Mammary epithelial cell (primary cell): ENCODE measurements at regions of chr16 and their contacts with region 1.

Region 1: DNA sequence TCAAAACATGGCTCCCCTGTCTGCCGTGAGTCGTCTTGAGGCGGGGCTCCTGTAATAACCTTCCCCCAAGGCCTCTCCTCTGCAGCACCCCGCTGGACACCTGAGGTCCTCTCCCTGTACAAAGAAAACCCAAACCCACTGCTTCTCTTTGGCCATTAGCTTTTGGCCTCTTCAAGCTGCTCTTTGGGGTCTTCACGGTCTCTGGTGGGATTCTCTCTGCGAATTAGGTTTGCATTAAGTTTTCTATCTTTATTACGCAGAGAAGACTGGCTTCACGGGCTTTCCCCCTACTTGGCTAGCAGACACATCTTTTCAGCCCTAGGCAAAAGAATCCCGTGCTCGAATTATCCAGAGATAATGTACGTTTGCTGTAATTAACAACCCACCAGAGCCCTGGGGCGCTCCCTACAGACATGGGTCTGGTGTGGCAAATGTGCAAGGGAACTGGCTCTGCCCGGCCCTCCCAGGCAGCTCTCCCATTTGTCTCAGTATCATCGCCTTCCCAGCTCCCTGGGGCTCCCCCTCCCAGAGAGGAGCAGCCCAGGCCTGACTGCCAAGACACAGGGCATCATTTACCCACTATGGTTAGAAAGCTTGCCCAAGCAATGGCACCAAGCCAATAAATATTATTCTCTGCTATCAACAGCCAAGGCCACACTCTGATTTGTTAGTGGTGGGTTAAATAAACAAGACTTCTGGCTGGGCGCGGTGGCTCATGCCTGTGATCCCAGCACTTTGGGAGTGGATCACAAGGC is 24.7 kb upstream of the KLHDC4 start:
- DNase-seq: peak; percentile 89
- H3K4me3 ChIP-seq: no peak overlapping the region
- H3K27ac ChIP-seq: peak overlapping the region; percentile 96
- H3K4me1 ChIP-seq: peaks cover 34% of the 10 kb centered on the region
- H3K27me3 ChIP-seq: no peaks in the 10 kb centered on the region
- CTCF ChIP-seq: no peak

Region 2: DNA sequence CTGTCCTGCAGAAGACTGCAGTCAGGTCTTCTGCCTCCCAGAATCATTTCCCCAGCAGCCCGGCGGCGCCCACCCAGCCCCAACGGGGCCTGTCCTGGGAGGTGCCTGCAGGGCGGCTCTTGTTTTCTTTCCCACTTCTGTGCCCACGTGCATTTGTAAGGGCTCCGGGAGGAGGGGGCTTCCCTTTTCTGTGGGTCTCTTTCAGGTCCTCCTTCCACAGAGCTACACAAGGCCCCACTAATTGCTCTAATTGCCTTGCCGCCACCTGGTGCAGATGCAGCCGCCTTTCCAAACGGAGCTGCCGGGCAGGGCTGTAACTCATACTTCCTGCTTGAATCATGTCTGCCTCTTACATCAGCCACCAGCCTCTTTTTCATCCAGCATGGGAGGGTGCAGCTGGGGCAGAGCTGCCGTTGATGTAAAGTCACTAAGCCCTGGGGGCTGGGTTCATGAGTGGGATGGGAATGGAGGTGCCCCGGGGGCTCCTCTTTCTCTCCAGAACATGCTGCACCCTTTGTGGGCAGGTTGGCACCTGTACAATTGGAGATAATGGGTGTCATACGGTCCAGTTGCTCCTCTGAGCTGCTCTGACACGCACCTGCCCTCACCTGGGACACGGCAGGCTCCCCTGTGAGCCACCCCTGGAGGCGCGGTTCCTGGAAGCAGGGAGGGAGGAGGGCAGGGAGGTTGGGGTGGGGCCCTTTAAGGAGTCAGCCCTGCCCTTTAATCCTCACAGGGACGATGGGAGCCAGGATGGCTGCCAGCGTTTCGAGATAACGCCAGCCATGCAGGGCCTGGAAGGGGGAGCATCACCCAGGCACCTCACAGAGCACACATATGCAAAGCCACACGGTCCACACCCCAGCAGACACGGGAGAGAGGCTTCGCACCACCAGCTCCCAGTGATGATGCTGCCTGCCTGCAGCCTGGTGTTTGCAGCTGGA is 16.4 kb after region 1 on chr16:
- CTCF ChIA-PET with region 1: no interaction called
- dilution Hi-C with region 1: no loop called
- in situ Hi-C with region 1: no loop called
- intact Hi-C with region 1: loop called (anchors 1 kb)
- DNase-seq: peak; percentile 99
- H3K4me3 ChIP-seq: peak overlapping the region in 2 of 3 experiments; percentile 24 to 34
- H3K27ac ChIP-seq: peak overlapping the region; percentile 84
- H3K4me1 ChIP-seq: peaks cover 52% of the 10 kb centered on the region
- H3K27me3 ChIP-seq: no peaks in the 10 kb centered on the region
- CTCF ChIP-seq: peak in 1 of 2 donors; percentile 27

Region 3: DNA sequence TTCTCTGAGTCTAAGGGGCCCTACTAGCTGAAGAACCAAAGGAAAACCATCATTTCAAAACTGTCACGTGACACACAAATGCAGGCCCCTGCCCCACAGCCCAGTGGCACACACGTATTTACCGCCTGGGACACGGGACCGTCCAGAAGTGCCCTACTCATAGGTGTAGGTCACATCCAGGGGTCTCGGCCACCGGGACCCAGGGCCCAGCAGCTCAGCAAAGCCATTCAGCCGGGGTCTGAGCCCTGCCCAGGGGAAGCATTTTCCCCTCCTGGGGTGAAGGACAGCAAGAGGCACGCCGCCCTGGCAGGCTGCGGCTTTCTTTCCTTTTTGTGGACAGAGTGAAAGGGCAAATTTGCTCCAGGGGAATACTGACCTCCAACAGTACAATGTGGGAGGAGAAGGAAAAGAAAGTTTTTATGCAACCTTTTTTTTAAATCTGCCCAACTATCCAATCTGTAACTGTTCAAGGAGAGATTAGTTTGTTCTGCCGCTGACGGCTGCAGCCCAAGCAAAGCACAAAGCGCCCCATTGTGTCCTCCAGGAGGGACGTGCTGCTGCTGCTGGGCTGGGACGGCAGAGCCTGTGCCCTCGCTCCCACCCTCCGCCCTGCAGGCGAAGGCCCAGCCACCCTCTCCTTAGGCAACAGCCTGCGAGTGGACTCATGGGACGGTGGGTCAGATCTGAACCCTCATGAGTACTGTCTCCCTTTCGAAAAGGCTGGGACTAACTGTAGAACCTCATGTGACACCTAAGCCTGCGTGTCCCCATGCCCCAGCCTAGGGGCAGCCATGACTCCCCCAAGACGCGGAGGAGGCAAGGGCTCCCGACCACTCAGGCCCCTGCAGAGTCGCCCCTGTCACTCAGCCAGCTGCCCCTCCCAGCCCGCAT is 57.6 kb after region 1 on chr16:
- CTCF ChIA-PET with region 1: no interaction called
- dilution Hi-C with region 1: loop called (anchors 5 kb)
- in situ Hi-C with region 1: no loop called
- intact Hi-C with region 1: no loop called
- DNase-seq: no peak
- H3K4me3 ChIP-seq: no peak overlapping the region
- H3K27ac ChIP-seq: no peak overlapping the region
- H3K4me1 ChIP-seq: peaks cover 39% of the 10 kb centered on the region
- H3K27me3 ChIP-seq: no peaks in the 10 kb centered on the region
- CTCF ChIP-seq: no peak